ENCODE measurements at regions of chr10 and their contacts with region 1.

Region 1: DNA sequence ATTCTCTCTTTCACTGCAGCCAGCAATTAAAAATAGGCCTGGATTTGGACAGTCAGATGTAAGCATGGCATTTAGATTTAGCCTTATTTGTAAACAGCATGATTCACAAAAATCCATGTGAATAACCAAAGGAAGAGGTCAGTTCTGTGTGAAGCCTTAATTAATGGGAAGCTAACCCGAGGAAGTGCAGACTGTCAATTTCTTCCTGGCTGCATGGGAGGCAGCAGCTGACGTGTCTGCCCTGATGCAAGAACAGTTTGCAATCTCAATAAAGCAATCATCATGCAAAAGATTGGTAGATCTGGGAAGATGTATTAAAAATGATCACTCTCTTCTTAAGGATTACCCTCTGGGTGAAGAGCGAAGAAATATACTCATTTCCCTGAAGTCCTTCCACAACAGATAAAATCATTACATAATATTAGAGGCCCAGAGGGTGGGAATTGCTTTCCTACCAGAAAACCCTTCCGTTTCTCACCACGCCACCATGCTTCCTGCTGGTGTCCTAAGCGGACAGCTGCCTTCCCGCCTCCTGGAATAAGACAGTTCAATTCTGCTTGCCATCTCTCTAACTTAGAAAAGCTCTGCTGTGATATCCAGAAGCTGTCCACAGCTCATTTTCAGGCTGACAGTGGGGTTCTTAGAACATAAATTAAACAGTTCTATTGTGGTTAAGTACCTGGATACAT is 526.7 kb upstream of the NRP1 start:
- DNase-seq: no peak
- ATAC-seq: no peak
- H3K4me3 ChIP-seq: no peak overlapping the region
- H3K27ac ChIP-seq: no peak overlapping the region
- H3K4me1 ChIP-seq: no peaks in the 10 kb centered on the region
- H3K27me3 ChIP-seq: no peaks in the 10 kb centered on the region
- CTCF ChIP-seq: no peak
- EP300 ChIP-seq: no peak
- POLR2A ChIP-seq: no peak
- RAD21 ChIP-seq: no peak

Region 2: GRCh38 chr10:33871061-33871956 is 10.1 kb after region 1 on chr10:
- CTCF ChIA-PET with region 1: interaction called, 4 read pairs
- POLR2A ChIA-PET with region 1: no interaction called
- RAD21 ChIA-PET with region 1: no interaction called
- SMC1A ChIA-PET with region 1: interaction called, 15 read pairs
- in situ Hi-C with region 1: no loop called
- intact Hi-C with region 1: no loop called
- DNase-seq: no peak
- ATAC-seq: no peak
- H3K4me3 ChIP-seq: no peak overlapping the region
- H3K27ac ChIP-seq: no peak overlapping the region
- H3K4me1 ChIP-seq: no peaks in the 10 kb centered on the region
- H3K27me3 ChIP-seq: no peaks in the 10 kb centered on the region
- CTCF ChIP-seq: no peak
- EP300 ChIP-seq: no peak
- POLR2A ChIP-seq: no peak
- RAD21 ChIP-seq: no peak

Region 3: GRCh38 chr10:33901166-33901565 is 40.0 kb after region 1 on chr10:
- CTCF ChIA-PET with region 1: no interaction called
- POLR2A ChIA-PET with region 1: no interaction called
- RAD21 ChIA-PET with region 1: no interaction called
- SMC1A ChIA-PET with region 1: no interaction called
- in situ Hi-C with region 1: no loop called
- intact Hi-C with region 1: no loop called
- DNase-seq: no peak
- ATAC-seq: no peak
- H3K4me3 ChIP-seq: no peak overlapping the region
- H3K27ac ChIP-seq: no peak overlapping the region
- H3K4me1 ChIP-seq: no peaks in the 10 kb centered on the region
- H3K27me3 ChIP-seq: no peaks in the 10 kb centered on the region
- CTCF ChIP-seq: no peak
- EP300 ChIP-seq: no peak
- POLR2A ChIP-seq: no peak
- RAD21 ChIP-seq: no peak

Region 4: GRCh38 chr10:33913194-33913593 is 52.0 kb after region 1 on chr10:
- CTCF ChIA-PET with region 1: no interaction called
- POLR2A ChIA-PET with region 1: no interaction called
- RAD21 ChIA-PET with region 1: no interaction called
- SMC1A ChIA-PET with region 1: no interaction called
- in situ Hi-C with region 1: no loop called
- intact Hi-C with region 1: no loop called
- DNase-seq: no peak
- ATAC-seq: no peak
- H3K4me3 ChIP-seq: no peak overlapping the region
- H3K27ac ChIP-seq: no peak overlapping the region
- H3K4me1 ChIP-seq: no peaks in the 10 kb centered on the region
- H3K27me3 ChIP-seq: no peaks in the 10 kb centered on the region
- CTCF ChIP-seq: no peak
- EP300 ChIP-seq: no peak
- POLR2A ChIP-seq: no peak
- RAD21 ChIP-seq: no peak

Measured in GM12878 (cell line).